Psoas muscle (tissue), 8 donors: ENCODE measurements at regions of chr4 and their contacts with region 1.

Region 1: DNA sequence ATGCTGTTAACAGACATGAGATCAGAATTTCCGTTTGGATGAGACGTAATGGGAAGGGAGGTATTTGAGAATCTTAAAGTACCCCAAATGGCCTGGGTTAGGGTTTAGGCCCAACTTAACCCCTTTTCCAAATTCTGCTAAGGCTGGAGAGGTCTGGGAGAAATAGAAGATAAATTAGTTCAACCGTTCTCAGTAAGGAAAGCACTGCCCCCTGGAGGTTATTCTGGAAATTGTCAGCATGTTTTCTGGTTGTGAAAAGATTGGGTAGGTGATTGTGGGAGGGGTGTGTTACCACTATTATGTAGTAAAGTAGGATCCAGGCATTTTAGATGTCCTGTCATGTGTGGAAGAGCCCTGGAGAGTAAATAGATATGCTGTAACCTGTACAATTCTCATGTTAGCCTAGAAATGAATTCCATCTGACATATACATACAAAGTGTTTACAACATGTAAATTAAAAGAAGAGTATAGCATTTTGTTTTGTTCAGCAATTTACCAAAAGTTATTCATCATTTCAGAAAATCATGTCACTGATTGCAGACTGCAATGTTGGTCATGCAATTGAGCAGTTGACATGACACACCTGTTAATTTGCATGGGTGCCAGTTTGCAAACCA is 26.8 kb upstream of the GRXCR1 start:
- DNase-seq: no peak
- ATAC-seq: peak in 3 of 4 donors; percentile 51 to 60 (median 53)
- H3K4me3 ChIP-seq: no peak overlapping the region
- H3K27ac ChIP-seq: no peak overlapping the region
- H3K4me1 ChIP-seq: no peaks in the 10 kb centered on the region
- H3K27me3 ChIP-seq: peaks cover 0 to 4% (median 0%) of the 10 kb centered on the region in 3 donors
- CTCF ChIP-seq: peak; percentile 80

Region 2: DNA sequence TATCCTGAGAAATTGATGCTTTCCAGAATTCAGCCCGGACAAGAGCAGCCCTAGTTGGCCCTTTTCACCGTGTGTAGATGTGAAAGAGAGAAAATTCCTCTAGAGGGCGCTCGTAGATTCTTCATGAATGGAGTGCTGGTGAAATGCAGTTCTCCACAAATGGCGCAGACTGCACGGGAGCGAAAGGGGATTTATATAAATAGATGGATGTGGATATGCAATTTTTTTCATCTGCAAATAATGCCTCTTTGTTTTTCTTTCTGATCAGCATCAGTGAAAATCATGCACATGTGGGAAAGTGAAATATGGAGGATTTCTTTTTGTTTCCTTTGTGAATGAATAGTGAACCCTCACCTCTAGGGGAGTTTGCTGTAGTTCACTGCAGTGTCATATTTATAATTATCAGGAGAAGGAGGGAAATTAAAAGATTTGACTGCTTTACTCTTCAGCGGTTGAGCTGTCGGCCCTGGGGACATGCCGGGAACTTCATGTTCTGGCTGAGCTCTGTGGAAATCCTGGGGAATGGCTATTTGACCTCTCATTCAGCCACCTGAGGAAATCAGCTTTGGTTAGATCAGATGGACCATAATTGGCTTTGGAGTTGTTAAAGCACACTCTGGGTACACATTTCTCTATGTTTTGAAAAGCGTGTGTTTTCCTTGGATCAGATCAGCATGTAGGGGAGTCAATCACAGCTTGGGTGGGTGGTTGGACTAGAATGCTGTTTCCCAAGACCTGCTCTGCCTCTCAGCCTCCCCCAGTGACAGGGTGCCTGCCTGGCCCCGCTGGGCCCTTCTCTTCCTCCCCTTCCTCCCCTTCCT is 583.4 kb before region 1 on chr4:
- intact Hi-C with region 1: loop called (anchors 5 to 10 kb)
- DNase-seq: peak in 1 of 2 donors; percentile 74
- ATAC-seq: peak; percentile 68 to 93 (median 87)
- H3K4me3 ChIP-seq: no peak overlapping the region
- H3K27ac ChIP-seq: no peak overlapping the region
- H3K4me1 ChIP-seq: no peaks in the 10 kb centered on the region
- H3K27me3 ChIP-seq: no peaks in the 10 kb centered on the region
- CTCF ChIP-seq: peak; percentile 70

Region 3: DNA sequence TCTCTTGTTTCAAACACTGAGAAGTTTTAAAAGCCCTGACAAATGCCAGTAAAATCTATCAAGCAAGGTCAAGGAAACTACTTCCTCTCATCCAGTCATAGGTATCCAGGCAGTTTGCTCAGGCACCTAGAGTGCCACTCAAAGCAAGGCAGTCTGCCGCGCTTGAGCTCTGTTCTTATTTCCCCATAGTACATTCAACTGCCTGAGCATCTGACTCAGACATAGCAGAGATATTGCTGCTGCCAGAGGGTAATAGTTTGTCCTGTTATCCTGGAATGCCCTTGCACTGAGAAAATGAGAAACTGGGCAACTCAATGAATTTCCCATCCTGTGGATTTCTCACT is 192.6 kb before region 1 on chr4:
- intact Hi-C with region 1: loop called in 1 of 2 experiments (anchors 10 kb)
- DNase-seq: peak in 1 of 2 donors; percentile 27
- ATAC-seq: peak; percentile 74 to 100 (median 97)
- H3K4me3 ChIP-seq: no peak overlapping the region
- H3K27ac ChIP-seq: no peak overlapping the region
- H3K4me1 ChIP-seq: no peaks in the 10 kb centered on the region
- H3K27me3 ChIP-seq: no peaks in the 10 kb centered on the region
- CTCF ChIP-seq: no peak